Activated CD4-positive, alpha-beta T cell treated with anti-CD3 and anti-CD28 coated beads, Interleukin-2, amount 10 ng/mL, durations not matched to agents 24 days and 14 days (primary cell): ENCODE measurements at regions of chr1 and their contacts with region 1.

Region 1: DNA sequence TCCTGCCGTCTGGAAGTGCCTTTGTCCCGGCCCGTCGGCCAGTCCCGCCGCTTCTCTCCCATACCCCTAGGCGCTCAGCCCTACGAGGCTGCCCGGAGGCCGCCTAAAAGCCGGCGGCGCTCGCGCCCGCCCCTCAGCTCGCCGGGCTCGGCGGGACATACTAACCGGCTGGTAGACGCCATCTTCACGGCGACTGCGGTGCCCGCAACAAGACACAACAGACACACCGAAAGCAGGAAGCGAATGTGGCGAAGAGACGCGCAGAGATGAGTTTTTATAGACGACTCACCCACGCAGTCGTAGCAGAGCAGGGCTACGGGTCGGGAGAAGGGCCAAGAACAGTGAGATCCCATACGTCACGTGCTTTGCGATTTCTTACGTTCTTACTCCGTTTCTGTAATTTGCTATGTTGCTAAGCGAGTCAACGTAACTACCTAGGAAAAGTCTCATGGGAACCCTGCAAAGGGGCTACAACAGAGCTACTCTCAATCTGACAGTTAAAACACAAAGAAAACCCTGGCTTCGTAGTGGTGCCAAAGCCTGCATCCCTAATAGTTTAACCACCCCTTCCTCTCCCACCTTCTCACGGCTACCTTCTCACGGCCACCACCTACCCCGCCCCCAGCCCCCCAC is at the start of gene GTF2B:
- DNase-seq: peak; percentile 98
- H3K4me3 Mint-ChIP-seq: peak within 1 kb of the TSS; percentile 91
- H3K27ac Mint-ChIP-seq: peak within 1 kb of the TSS; percentile 98
- H3K4me1 Mint-ChIP-seq: peaks cover 37% of the 10 kb centered on the region
- H3K27me3 Mint-ChIP-seq: peaks cover 6% of the 10 kb centered on the region
- total RNA-seq, gene GTF2B: 41.2 and 42.2 TPM in 2 replicates

Region 2: GRCh38 chr1:88867743-88868521 is 23.5 kb before region 1 on chr1:
- intact Hi-C with region 1: loop called (anchors 1 kb)
- DNase-seq: no peak
- H3K4me3 Mint-ChIP-seq: peak overlapping the region; percentile 69
- H3K27ac Mint-ChIP-seq: peak overlapping the region; percentile 82
- H3K4me1 Mint-ChIP-seq: peaks cover 36% of the 10 kb centered on the region
- H3K27me3 Mint-ChIP-seq: no peaks in the 10 kb centered on the region

Region 3: GRCh38 chr1:88990426-88990825 is 99.0 kb after region 1 on chr1:
- intact Hi-C with region 1: loop called (anchors 1 kb)
- DNase-seq: no peak
- H3K4me3 Mint-ChIP-seq: peak overlapping the region; percentile 20
- H3K27ac Mint-ChIP-seq: no peak overlapping the region
- H3K4me1 Mint-ChIP-seq: peaks cover 43% of the 10 kb centered on the region
- H3K27me3 Mint-ChIP-seq: no peaks in the 10 kb centered on the region

Region 4: GRCh38 chr1:89994805-89995597 is 1103.6 kb after region 1 on chr1 and contains the start of gene ZNF326:
- intact Hi-C with region 1: loop called (anchors 10 kb)
- DNase-seq: peak; percentile 99
- H3K4me3 Mint-ChIP-seq: peak within 1 kb of the TSS; percentile 94
- H3K27ac Mint-ChIP-seq: peak within 1 kb of the TSS; percentile 98
- H3K4me1 Mint-ChIP-seq: peaks cover 35% of the 10 kb centered on the region
- H3K27me3 Mint-ChIP-seq: peaks cover 6% of the 10 kb centered on the region
- total RNA-seq, gene ZNF326: 36.8 and 38.1 TPM in 2 replicates